ENCODE measurements at regions of chr5 and their contacts with region 1.

Region 1: GRCh38 chr5:174951146-174951780 is 226.9 kb downstream of the MSX2 start:
- DNase-seq: peak in 1 of 2 donors; percentile 56
- ATAC-seq: peak; percentile 70 to 82 (median 76)
- H3K4me3 ChIP-seq: no peak overlapping the region
- H3K27ac ChIP-seq: no peak overlapping the region
- H3K4me1 ChIP-seq: no peaks in the 10 kb centered on the region
- H3K27me3 ChIP-seq: peaks cover 0 to 52% (median 15%) of the 10 kb centered on the region in 7 donors
- CTCF ChIP-seq: peak; percentile 58 to 86 (median 80)

Region 2: GRCh38 chr5:173925448-173926071 is 1025.7 kb before region 1 on chr5:
- intact Hi-C with region 1: no loop called
- DNase-seq: peak; percentile 30 to 41
- ATAC-seq: peak in 1 of 8 donors; percentile 46
- H3K4me3 ChIP-seq: no peak overlapping the region
- H3K27ac ChIP-seq: peak overlapping the region in 9 of 10 donors; percentile 45 to 91 (median 85)
- H3K4me1 ChIP-seq: peaks cover 9 to 100% (median 82%) of the 10 kb centered on the region in 9 donors
- H3K27me3 ChIP-seq: no peaks in the 10 kb centered on the region
- CTCF ChIP-seq: peak in 7 of 9 donors; percentile 37 to 70 (median 58)

Region 3: DNA sequence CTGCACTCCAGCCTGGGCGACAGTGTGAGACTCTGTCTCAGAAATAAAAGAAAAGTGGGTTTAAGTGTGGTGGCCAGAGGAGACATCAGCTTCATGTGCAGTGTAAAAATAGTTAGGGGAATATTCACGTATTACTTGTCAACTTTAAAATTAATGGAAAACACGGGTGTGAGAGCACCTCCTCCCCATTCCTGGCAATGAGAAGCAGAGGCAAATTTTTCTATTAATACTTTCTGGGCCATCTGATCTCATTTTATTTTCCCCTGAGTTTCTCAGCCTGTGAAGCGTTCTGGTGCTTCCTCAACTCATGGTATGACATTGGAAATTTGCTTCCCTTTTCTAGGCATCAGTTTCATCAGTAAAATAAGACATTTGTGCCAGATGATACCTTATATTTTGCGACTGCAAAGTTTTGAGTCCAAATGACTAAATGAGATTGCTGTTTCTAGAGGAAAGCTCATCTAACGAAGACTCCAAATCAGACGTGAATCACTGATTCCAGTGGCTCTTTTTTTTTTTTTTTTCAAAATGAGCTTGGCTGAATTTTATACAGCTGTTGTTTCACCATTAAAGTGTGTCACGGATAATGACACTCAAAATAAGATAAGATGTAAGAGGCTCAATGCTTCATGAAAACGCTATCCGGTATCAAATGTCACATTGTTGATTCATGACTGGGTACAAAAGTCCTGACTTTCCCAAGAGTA is 122.3 kb before region 1 on chr5:
- intact Hi-C with region 1: no loop called
- DNase-seq: no peak
- ATAC-seq: peak in 5 of 8 donors; percentile 21 to 64 (median 50)
- H3K4me3 ChIP-seq: no peak overlapping the region
- H3K27ac ChIP-seq: peak overlapping the region in 7 of 10 donors; percentile 20 to 71 (median 52)
- H3K4me1 ChIP-seq: peaks cover 0 to 6% (median 0%) of the 10 kb centered on the region in 9 donors
- H3K27me3 ChIP-seq: peaks cover 0 to 13% (median 0%) of the 10 kb centered on the region in 7 donors
- CTCF ChIP-seq: no peak

Region 4: GRCh38 chr5:175444060-175444904 is 493.0 kb after region 1 on chr5 and contains the start of gene DRD1:
- intact Hi-C with region 1: loop called in 9 of 10 experiments (anchors 1 to 5 kb)
- DNase-seq: peak in 1 of 2 donors; percentile 36
- ATAC-seq: peak in 6 of 8 donors; percentile 59 to 88 (median 70)
- H3K4me3 ChIP-seq: peak within 1 kb of the TSS in 8 of 10 donors; percentile 8 to 35 (median 26)
- H3K27ac ChIP-seq: no peak within 1 kb of the TSS
- H3K4me1 ChIP-seq: peaks cover 0 to 13% (median 8%) of the 10 kb centered on the region in 9 donors
- H3K27me3 ChIP-seq: peaks cover 18 to 100% (median 84%) of the 10 kb centered on the region in 7 donors
- CTCF ChIP-seq: peak; percentile 36 to 73 (median 64)
- total RNA-seq, gene DRD1: 0.06 to 0.12 (median 0.09) TPM in 3 of 10 donors, not detected in the others

Region 5: GRCh38 chr5:175457466-175457865 is 506.2 kb after region 1 on chr5:
- intact Hi-C with region 1: loop called in 6 of 10 experiments (anchors 5 kb)
- DNase-seq: no peak
- ATAC-seq: no peak
- H3K4me3 ChIP-seq: no peak overlapping the region
- H3K27ac ChIP-seq: no peak overlapping the region
- H3K4me1 ChIP-seq: no peaks in the 10 kb centered on the region
- H3K27me3 ChIP-seq: peaks cover 0 to 61% (median 52%) of the 10 kb centered on the region in 7 donors
- CTCF ChIP-seq: no peak

Region 6: GRCh38 chr5:175464074-175464941 is 513.0 kb after region 1 on chr5:
- intact Hi-C with region 1: loop called in 6 of 10 experiments (anchors 5 kb)
- DNase-seq: no peak
- ATAC-seq: peak in 4 of 8 donors; percentile 67 to 70 (median 67)
- H3K4me3 ChIP-seq: no peak overlapping the region
- H3K27ac ChIP-seq: no peak overlapping the region
- H3K4me1 ChIP-seq: no peaks in the 10 kb centered on the region
- H3K27me3 ChIP-seq: peaks cover 0 to 25% (median 11%) of the 10 kb centered on the region in 7 donors
- CTCF ChIP-seq: peak; percentile 49 to 72 (median 68)

Measured in heart right ventricle (tissue), 16 donors.